ENCODE measurements at regions of chr2 and their contacts with region 1.

Region 1: GRCh38 chr2:37052600-37053332 is 31.4 kb downstream of the HEATR5B start:
- DNase-seq: no peak
- ATAC-seq: no peak
- H3K4me3 Mint-ChIP-seq: no peak overlapping the region
- H3K27ac Mint-ChIP-seq: no peak overlapping the region
- H3K4me1 Mint-ChIP-seq: no peaks in the 10 kb centered on the region
- H3K27me3 Mint-ChIP-seq: no peaks in the 10 kb centered on the region
- CTCF ChIP-seq: no peak

Region 2: DNA sequence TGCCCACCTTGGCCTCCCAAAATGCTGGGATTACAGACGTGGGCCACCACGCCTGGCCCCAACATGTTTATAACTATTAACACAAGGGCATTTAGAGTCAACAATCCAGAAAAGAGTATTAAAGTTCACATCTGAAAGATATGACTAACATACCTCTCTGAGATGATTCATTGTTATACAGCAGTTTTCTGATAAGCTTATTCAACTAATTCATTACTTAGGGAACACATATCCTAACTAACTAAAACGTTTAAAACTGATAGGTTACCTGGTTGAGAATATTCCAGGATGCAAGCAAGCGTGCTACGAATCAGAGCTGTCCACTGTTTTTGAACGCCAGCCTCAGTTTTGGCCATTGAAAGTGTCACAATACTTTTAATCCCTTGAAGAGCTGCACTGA is 52.4 kb before region 1 on chr2:
- CTCF ChIA-PET with region 1: no interaction called
- POLR2A ChIA-PET with region 1: no interaction called
- intact Hi-C with region 1: no loop called
- DNase-seq: no peak
- ATAC-seq: no peak
- H3K4me3 Mint-ChIP-seq: no peak overlapping the region
- H3K27ac Mint-ChIP-seq: no peak overlapping the region
- H3K4me1 Mint-ChIP-seq: peaks cover 10% of the 10 kb centered on the region
- H3K27me3 Mint-ChIP-seq: no peaks in the 10 kb centered on the region
- CTCF ChIP-seq: no peak

Region 3: GRCh38 chr2:37039580-37039979 is 13.2 kb before region 1 on chr2:
- CTCF ChIA-PET with region 1: no interaction called
- POLR2A ChIA-PET with region 1: no interaction called
- intact Hi-C with region 1: loop called (anchors 2 kb)
- DNase-seq: no peak
- ATAC-seq: no peak
- H3K4me3 Mint-ChIP-seq: no peak overlapping the region
- H3K27ac Mint-ChIP-seq: no peak overlapping the region
- H3K4me1 Mint-ChIP-seq: no peaks in the 10 kb centered on the region
- H3K27me3 Mint-ChIP-seq: no peaks in the 10 kb centered on the region
- CTCF ChIP-seq: no peak

Measured in activated B cell treated with CpG ODN at 0.5 μM for 24 hours (primary cell).